Body of pancreas (tissue), 4 donors: ENCODE measurements at regions of chr11 and their contacts with region 1.

Region 1: GRCh38 chr11:131064373-131064991 is 148.2 kb upstream of the SNX19 start:
- DNase-seq: peak; percentile 40 to 62 (median 48)
- ATAC-seq: no peak
- H3K4me3 ChIP-seq: no peak overlapping the region
- H3K27ac ChIP-seq: no peak overlapping the region
- H3K4me1 ChIP-seq: no peaks in the 10 kb centered on the region
- H3K27me3 ChIP-seq: peaks cover 0 to 5% of the 10 kb centered on the region in 2 donors
- CTCF ChIP-seq: peak; percentile 63 to 75 (median 67)
- POLR2A ChIP-seq: no peak

Region 2: DNA sequence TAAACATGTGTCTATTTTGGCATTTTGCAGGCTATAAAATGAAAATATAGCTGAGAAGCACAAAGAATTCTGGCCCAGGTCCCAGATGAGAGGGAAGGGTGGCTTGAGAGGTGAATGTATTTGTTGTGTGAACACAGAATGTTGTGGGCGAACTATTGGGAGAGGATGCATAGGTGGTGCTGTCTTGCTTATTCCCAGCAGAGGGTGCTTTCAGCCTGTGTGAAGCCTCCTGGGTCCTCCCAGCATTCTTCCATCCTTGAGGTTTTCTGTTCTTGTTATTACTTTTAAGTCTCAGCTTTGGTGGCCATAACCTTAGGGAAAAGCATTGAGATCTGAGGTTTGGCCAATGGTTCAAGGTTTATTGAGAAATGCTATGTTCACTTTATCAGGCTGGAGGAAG is 39.5 kb before region 1 on chr11:
- intact Hi-C with region 1: no loop called
- DNase-seq: no peak
- ATAC-seq: no peak
- H3K4me3 ChIP-seq: no peak overlapping the region
- H3K27ac ChIP-seq: no peak overlapping the region
- H3K4me1 ChIP-seq: peaks cover 3% of the 10 kb centered on the region
- H3K27me3 ChIP-seq: no peaks in the 10 kb centered on the region
- CTCF ChIP-seq: peak in 1 of 7 experiments; percentile 17
- POLR2A ChIP-seq: no peak

Region 3: DNA sequence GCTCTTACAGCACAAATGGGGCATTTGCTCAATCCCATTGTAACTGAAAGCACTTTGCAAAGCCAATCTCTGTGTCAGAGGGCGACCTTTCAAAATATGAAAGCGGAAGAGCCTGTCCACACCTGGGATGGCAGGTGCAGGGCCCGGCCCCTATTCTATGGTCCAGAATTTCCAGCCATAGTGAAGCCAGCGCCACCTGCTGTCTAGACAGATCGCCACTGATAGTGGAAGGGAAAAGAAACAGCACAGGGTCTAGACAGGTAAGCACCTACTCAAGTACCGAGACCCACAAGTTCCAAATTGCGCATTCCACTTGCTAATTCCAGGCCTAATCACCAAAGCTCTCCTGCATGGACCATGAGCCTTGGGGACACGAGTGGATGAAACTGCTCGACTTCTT is 447.3 kb after region 1 on chr11:
- intact Hi-C with region 1: loop called (anchors 10 kb)
- DNase-seq: peak; percentile 50 to 76 (median 68)
- ATAC-seq: no peak
- H3K4me3 ChIP-seq: no peak overlapping the region
- H3K27ac ChIP-seq: no peak overlapping the region
- H3K4me1 ChIP-seq: no peaks in the 10 kb centered on the region
- H3K27me3 ChIP-seq: no peaks in the 10 kb centered on the region
- CTCF ChIP-seq: peak; percentile 42 to 75 (median 59)
- POLR2A ChIP-seq: no peak